GM12878 (cell line): ENCODE measurements at regions of chr6 and their contacts with region 1.

Region 1: GRCh38 chr6:70107852-70108629 is 194.8 kb downstream of the COL9A1 start:
- DNase-seq: peak; percentile 21
- ATAC-seq: peak; percentile 54
- H3K4me3 ChIP-seq: no peak overlapping the region
- H3K27ac ChIP-seq: no peak overlapping the region
- H3K4me1 ChIP-seq: no peaks in the 10 kb centered on the region
- H3K27me3 ChIP-seq: no peaks in the 10 kb centered on the region
- CTCF ChIP-seq: peak; percentile 50 to 71 (median 65)
- EP300 ChIP-seq: no peak
- POLR2A ChIP-seq: no peak
- RAD21 ChIP-seq: peak; percentile 92

Region 2: GRCh38 chr6:68876792-68877493 is 1231.1 kb before region 1 on chr6:
- CTCF ChIA-PET with region 1: interaction called, 3 read pairs
- POLR2A ChIA-PET with region 1: no interaction called
- RAD21 ChIA-PET with region 1: no interaction called
- SMC1A ChIA-PET with region 1: interaction called, 3 read pairs
- in situ Hi-C with region 1: no loop called
- intact Hi-C with region 1: loop called (anchors 10 kb)
- DNase-seq: no peak
- ATAC-seq: 0 out of 3 replicates have a peak, but pooled peaks have one; percentile 42
- H3K4me3 ChIP-seq: no peak overlapping the region
- H3K27ac ChIP-seq: no peak overlapping the region
- H3K4me1 ChIP-seq: no peaks in the 10 kb centered on the region
- H3K27me3 ChIP-seq: no peaks in the 10 kb centered on the region
- CTCF ChIP-seq: peak in 2 of 3 experiments; percentile 22 to 24; a peak in 3 of 6 replicates
- EP300 ChIP-seq: no peak
- POLR2A ChIP-seq: no peak
- RAD21 ChIP-seq: peak; percentile 49

Region 3: DNA sequence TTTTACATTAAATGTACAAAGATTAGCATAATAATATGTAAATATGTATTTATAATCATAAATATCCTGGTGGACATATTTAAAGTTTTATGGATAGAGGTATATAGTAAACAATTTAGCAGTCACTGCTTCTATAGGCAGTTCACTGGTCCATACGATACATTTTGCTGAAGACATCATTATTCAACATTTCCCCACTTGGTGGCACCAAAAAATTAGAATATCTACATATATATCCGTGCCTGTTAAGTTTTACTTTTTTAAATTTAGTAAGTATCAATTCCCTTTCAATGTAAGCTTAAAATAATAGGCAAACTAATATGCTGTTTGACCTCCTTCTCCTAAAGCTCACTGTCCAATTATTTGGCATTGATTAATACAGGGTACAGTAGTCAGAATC is 375.4 kb before region 1 on chr6:
- CTCF ChIA-PET with region 1: interaction called, 28 read pairs
- POLR2A ChIA-PET with region 1: no interaction called
- RAD21 ChIA-PET with region 1: interaction called, 19 read pairs
- SMC1A ChIA-PET with region 1: interaction called, 57 read pairs
- in situ Hi-C with region 1: loop called (anchors 25 kb)
- intact Hi-C with region 1: loop called (anchors 1 kb)
- DNase-seq: peak; percentile 11
- ATAC-seq: peak; percentile 90
- H3K4me3 ChIP-seq: no peak overlapping the region
- H3K27ac ChIP-seq: no peak overlapping the region
- H3K4me1 ChIP-seq: no peaks in the 10 kb centered on the region
- H3K27me3 ChIP-seq: no peaks in the 10 kb centered on the region
- CTCF ChIP-seq: peak; percentile 10 to 48 (median 29); a peak in 3 of 6 replicates
- EP300 ChIP-seq: no peak
- POLR2A ChIP-seq: no peak
- RAD21 ChIP-seq: peak; percentile 47

Region 4: GRCh38 chr6:69835414-69836179 is 272.4 kb before region 1 on chr6:
- CTCF ChIA-PET with region 1: interaction called, 78 read pairs
- POLR2A ChIA-PET with region 1: no interaction called
- RAD21 ChIA-PET with region 1: interaction called, 36 read pairs
- SMC1A ChIA-PET with region 1: interaction called, 65 read pairs
- in situ Hi-C with region 1: loop called (anchors 5 kb)
- intact Hi-C with region 1: loop called (anchors 1 kb)
- DNase-seq: no peak
- ATAC-seq: peak; percentile 92
- H3K4me3 ChIP-seq: no peak overlapping the region
- H3K27ac ChIP-seq: no peak overlapping the region
- H3K4me1 ChIP-seq: peaks cover 3% of the 10 kb centered on the region; the same call in 1 of the 2 replicates
- H3K27me3 ChIP-seq: no peaks in the 10 kb centered on the region
- CTCF ChIP-seq: peak; percentile 82 to 92 (median 82)
- EP300 ChIP-seq: no peak
- POLR2A ChIP-seq: no peak
- RAD21 ChIP-seq: peak; percentile 89

Region 5: GRCh38 chr6:70094156-70094555 is 13.9 kb before region 1 on chr6:
- CTCF ChIA-PET with region 1: interaction called, 18 read pairs
- POLR2A ChIA-PET with region 1: interaction called, 3 read pairs
- RAD21 ChIA-PET with region 1: interaction called, 3 read pairs
- SMC1A ChIA-PET with region 1: interaction called, 15 read pairs
- in situ Hi-C with region 1: no loop called
- intact Hi-C with region 1: no loop called
- DNase-seq: no peak
- ATAC-seq: no peak
- H3K4me3 ChIP-seq: no peak overlapping the region
- H3K27ac ChIP-seq: no peak overlapping the region
- H3K4me1 ChIP-seq: no peaks in the 10 kb centered on the region
- H3K27me3 ChIP-seq: no peaks in the 10 kb centered on the region
- CTCF ChIP-seq: no peak
- EP300 ChIP-seq: no peak
- POLR2A ChIP-seq: no peak
- RAD21 ChIP-seq: no peak

Region 6: DNA sequence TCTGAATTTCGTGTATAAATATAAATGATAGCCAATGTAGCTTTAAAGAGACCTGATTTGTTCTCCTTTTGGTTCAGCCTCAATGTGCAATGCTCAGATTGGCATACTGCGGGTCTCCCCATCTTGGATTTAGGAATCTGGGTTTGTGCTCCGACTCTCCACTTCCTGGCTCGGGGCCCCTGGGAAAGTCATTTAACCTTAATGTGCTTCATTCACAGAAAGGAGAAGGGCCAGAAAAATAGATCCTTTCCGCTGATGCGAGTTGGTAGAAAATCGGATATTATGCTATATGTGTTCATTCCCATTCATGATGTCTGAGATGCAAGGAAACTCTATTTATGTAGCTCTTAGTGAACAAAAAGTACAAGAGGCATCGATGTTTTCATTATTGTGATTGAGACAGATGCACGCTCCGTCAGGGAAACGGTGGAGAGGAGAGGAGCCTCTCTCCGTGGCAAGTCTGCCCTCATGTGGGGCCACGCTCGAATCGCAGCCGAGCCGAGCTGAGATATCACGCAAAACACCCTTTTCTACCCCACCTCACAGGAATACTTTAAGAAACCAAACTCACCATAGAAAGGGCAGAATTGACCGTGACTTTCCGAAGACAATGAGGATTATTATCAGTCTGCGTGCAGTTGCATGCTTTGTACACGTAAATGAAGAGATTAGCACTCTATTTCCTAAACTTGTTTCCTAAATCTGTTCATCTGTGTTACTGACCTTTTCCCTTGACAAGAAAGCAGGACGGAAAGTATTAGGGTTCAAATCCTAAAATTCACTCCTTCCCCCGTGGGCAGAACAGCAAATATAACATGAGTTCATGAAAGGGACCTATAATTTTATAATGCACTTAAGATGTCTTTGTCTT is 58.3 kb after region 1 on chr6:
- CTCF ChIA-PET with region 1: interaction called, 9 read pairs
- POLR2A ChIA-PET with region 1: no interaction called
- RAD21 ChIA-PET with region 1: interaction called, 4 read pairs
- SMC1A ChIA-PET with region 1: interaction called, 12 read pairs
- in situ Hi-C with region 1: no loop called
- intact Hi-C with region 1: no loop called
- DNase-seq: no peak
- ATAC-seq: peak; percentile 93
- H3K4me3 ChIP-seq: no peak overlapping the region
- H3K27ac ChIP-seq: no peak overlapping the region
- H3K4me1 ChIP-seq: peaks cover 6% of the 10 kb centered on the region; the same call in 1 of the 2 replicates
- H3K27me3 ChIP-seq: no peaks in the 10 kb centered on the region
- CTCF ChIP-seq: peak; percentile 69 to 82 (median 75)
- EP300 ChIP-seq: no peak
- POLR2A ChIP-seq: no peak
- RAD21 ChIP-seq: peak; percentile 79